H1 (cell line): ENCODE measurements at regions of chr15 and their contacts with region 1.

Region 1: GRCh38 chr15:64681424-64682024 is 93.9 kb downstream of the RBPMS2 start:
- DNase-seq: peak in 1 of 2 experiments; percentile 41
- H3K4me3 ChIP-seq: no peak overlapping the region
- H3K27ac ChIP-seq: no peak overlapping the region
- H3K4me1 ChIP-seq: peaks cover 0 to 8% (median 1%) of the 10 kb centered on the region in 4 experiments; a peak in 5 of 7 replicates
- H3K27me3 ChIP-seq: no peaks in the 10 kb centered on the region
- CTCF ChIP-seq: peak; percentile 57 to 100 (median 95)
- EP300 ChIP-seq: no peak
- POLR2A ChIP-seq: 0 out of 3 replicates have a peak, but pooled peaks of 1 of the 2 experiments have one; percentile 31
- RAD21 ChIP-seq: peak; percentile 99

Region 2: GRCh38 chr15:64426845-64427465 is 254.6 kb before region 1 on chr15:
- CTCF ChIA-PET with region 1: interaction called, 28 read pairs
- POLR2A ChIA-PET with region 1: interaction called, 3 read pairs
- DNase-seq: no peak
- H3K4me3 ChIP-seq: no peak overlapping the region
- H3K27ac ChIP-seq: no peak overlapping the region
- H3K4me1 ChIP-seq: peaks cover 0 to 6% (median 2%) of the 10 kb centered on the region in 4 experiments; a peak in 3 of 7 replicates
- H3K27me3 ChIP-seq: no peaks in the 10 kb centered on the region; a peak in 2 of 7 replicates
- CTCF ChIP-seq: no peak; a peak in 1 of 4 replicates
- EP300 ChIP-seq: no peak
- POLR2A ChIP-seq: no peak
- RAD21 ChIP-seq: peak; percentile 41 to 47; a peak in 3 of 4 replicates

Region 3: DNA sequence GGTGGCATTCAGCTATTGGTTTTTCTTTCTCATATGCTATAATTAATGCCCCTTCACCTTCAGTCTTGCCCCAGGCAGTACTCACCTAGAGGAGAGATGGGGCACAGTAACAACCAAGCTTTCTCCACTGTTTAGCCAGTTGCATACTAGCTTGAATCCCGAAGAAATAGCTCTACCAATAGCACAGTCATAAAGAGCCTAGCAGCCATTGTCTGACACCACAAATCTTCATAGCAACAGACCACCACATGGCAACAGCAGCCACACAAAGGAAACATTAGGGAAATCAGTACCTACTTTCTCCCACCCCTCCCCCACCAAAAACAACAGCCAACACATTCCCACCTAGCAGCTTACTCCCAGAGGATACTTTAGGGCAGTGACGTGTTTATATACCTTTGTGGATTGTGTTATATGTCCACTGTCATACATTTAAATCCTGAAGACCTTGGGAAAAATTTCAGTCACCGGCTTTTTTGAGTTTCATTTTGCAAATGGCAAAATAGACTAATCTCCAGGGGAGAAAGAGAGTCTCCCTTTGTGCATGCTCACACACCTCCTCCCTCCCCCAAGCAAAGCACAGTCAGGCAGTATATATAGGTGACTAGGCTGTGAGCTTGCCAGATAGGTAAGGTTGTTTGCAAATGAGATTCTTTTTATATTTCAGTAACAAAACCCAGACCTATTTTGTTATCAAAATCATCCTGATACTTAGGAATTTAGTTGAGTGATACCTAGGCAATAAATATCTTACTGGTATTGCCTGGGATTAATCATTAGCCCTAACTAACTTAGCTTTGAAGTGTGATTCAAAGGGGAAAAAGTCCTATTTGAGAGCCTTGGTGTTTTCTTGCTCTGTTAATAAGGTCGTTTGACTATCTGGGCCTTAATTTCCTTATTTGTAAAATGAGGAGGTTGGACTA is 46.7 kb before region 1 on chr15:
- CTCF ChIA-PET with region 1: interaction called, 18 read pairs
- POLR2A ChIA-PET with region 1: interaction called, 5 read pairs
- DNase-seq: peak; percentile 38 to 50
- H3K4me3 ChIP-seq: peak overlapping the region in 2 of 4 experiments; percentile 14 to 46; a peak in 3 of 8 replicates
- H3K27ac ChIP-seq: peak overlapping the region; percentile 84
- H3K4me1 ChIP-seq: peaks cover 9 to 21% (median 17%) of the 10 kb centered on the region in 4 experiments; a peak in 6 of 7 replicates
- H3K27me3 ChIP-seq: no peaks in the 10 kb centered on the region
- CTCF ChIP-seq: no peak
- EP300 ChIP-seq: peak; percentile 2 to 96; a peak in 2 of 3 replicates
- POLR2A ChIP-seq: peak; percentile 32 to 64; a peak in 2 of 3 replicates
- RAD21 ChIP-seq: no peak

Region 4: GRCh38 chr15:64693134-64693533 is 11.6 kb after region 1 on chr15:
- CTCF ChIA-PET with region 1: interaction called, 106 read pairs
- POLR2A ChIA-PET with region 1: interaction called, 1,192 read pairs
- DNase-seq: no peak
- H3K4me3 ChIP-seq: no peak overlapping the region
- H3K27ac ChIP-seq: no peak overlapping the region
- H3K4me1 ChIP-seq: peaks cover 3 to 21% (median 10%) of the 10 kb centered on the region in 4 experiments; a peak in 5 of 7 replicates
- H3K27me3 ChIP-seq: peaks cover 0 to 2% (median 0%) of the 10 kb centered on the region in 4 experiments; a peak in 1 of 7 replicates
- CTCF ChIP-seq: no peak
- EP300 ChIP-seq: no peak
- POLR2A ChIP-seq: peak; percentile 22 to 57; a peak in 2 of 3 replicates
- RAD21 ChIP-seq: no peak

Region 5: GRCh38 chr15:64717735-64718495 is 36.4 kb after region 1 on chr15:
- CTCF ChIA-PET with region 1: interaction called, 262 read pairs
- POLR2A ChIA-PET with region 1: interaction called, 1,192 read pairs
- DNase-seq: no peak
- H3K4me3 ChIP-seq: no peak overlapping the region
- H3K27ac ChIP-seq: no peak overlapping the region; the same call in 1 of the 2 replicates
- H3K4me1 ChIP-seq: no peaks in the 10 kb centered on the region
- H3K27me3 ChIP-seq: no peaks in the 10 kb centered on the region
- CTCF ChIP-seq: no peak
- EP300 ChIP-seq: no peak
- POLR2A ChIP-seq: no peak
- RAD21 ChIP-seq: no peak

Region 6: GRCh38 chr15:64775551-64776401 is 94.3 kb after region 1 on chr15 and contains the start of gene RBPMS2:
- CTCF ChIA-PET with region 1: no interaction called
- POLR2A ChIA-PET with region 1: no interaction called
- DNase-seq: peak in 1 of 2 experiments; percentile 62
- H3K4me3 ChIP-seq: peak within 1 kb of the TSS; percentile 74 to 95 (median 88)
- H3K27ac ChIP-seq: peak within 1 kb of the TSS; percentile 81; the same call in 1 of the 2 replicates
- H3K4me1 ChIP-seq: peaks cover 23 to 34% (median 30%) of the 10 kb centered on the region in 4 experiments
- H3K27me3 ChIP-seq: no peaks in the 10 kb centered on the region
- CTCF ChIP-seq: no peak
- EP300 ChIP-seq: no peak
- POLR2A ChIP-seq: no peak; a peak in 1 of 3 replicates
- RAD21 ChIP-seq: no peak
- total RNA-seq, gene RBPMS2: 238 and 243 TPM in 2 replicates

Region 7: DNA sequence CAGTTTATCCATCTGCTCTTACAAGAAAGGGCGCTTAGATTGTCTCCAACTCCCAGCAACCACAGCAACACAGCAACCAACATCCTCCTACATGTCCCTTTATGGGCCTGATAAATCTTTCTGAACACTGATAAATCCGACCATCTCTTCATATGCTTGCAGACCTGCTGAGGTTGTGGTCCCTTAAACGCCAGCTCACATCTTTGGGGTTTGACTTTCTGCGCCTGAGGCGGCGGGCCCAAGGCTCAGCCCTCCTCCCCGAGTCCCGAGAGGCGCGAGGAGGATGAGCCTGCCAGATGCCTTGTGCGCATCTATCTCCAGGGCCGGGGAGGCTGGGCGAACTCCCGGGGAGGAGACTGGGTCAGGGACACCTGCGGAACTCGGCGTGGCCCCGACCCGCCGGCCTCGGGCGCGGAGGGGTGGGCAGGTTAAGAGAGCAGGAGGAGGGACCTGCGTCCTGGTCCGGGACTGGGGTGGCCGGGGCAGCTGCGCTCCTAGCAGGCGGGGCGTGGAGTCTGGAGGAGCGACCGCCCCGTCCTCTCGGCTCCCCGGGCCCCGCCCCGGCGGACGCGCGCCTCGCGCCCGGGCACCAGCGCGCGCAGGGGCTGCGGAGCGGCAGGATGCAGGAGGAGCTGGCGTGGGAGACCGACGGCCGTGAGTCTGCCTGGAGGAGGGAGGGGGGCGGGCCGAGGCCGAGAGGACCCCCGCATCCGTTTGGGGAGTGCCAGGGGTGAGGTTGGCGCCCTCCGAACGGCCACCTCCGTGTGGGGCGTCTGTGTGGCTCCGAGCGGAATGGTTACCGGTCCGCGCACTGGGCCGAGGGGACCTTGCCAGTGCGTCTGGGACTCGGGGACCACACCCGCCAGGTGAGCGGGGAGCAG is 230.0 kb after region 1 on chr15 and contains the start of gene ANKDD1A:
- CTCF ChIA-PET with region 1: no interaction called
- POLR2A ChIA-PET with region 1: no interaction called
- DNase-seq: peak in 1 of 2 experiments; percentile 90
- H3K4me3 ChIP-seq: peak within 1 kb of the TSS; percentile 58 to 69 (median 64)
- H3K27ac ChIP-seq: no peak within 1 kb of the TSS
- H3K4me1 ChIP-seq: peaks cover 0 to 16% (median 10%) of the 10 kb centered on the region in 4 experiments; a peak in 6 of 7 replicates
- H3K27me3 ChIP-seq: peaks cover 0 to 14% (median 13%) of the 10 kb centered on the region in 4 experiments; a peak in 6 of 7 replicates
- CTCF ChIP-seq: no peak
- EP300 ChIP-seq: no peak
- POLR2A ChIP-seq: peak in 1 of 2 experiments; percentile 38; a peak in 1 of 3 replicates
- RAD21 ChIP-seq: no peak
- total RNA-seq, gene ANKDD1A: 5.0 and 5.7 TPM in 2 replicates